ENCODE measurements at regions of chr5 and their contacts with region 1.

Region 1: GRCh38 chr5:72816311-72817145 is at the start of gene TNPO1:
- DNase-seq: peak; percentile 89
- ATAC-seq: peak; percentile 79
- H3K4me3 Mint-ChIP-seq: peak within 1 kb of the TSS; percentile 88
- H3K27ac Mint-ChIP-seq: peak within 1 kb of the TSS; percentile 85
- H3K4me1 Mint-ChIP-seq: peaks cover 14% of the 10 kb centered on the region
- H3K27me3 Mint-ChIP-seq: peaks cover 14% of the 10 kb centered on the region
- total RNA-seq, gene TNPO1: 107 to 162 TPM

Region 2: GRCh38 chr5:72366324-72366976 is 450.1 kb before region 1 on chr5:
- CTCF ChIA-PET with region 1: interaction called, 5 read pairs
- POLR2A ChIA-PET with region 1: no interaction called
- intact Hi-C with region 1: loop called (anchors 2 to 10 kb)
- DNase-seq: peak; percentile 58
- ATAC-seq: peak; percentile 73
- H3K4me3 Mint-ChIP-seq: no peak overlapping the region
- H3K27ac Mint-ChIP-seq: no peak overlapping the region
- H3K4me1 Mint-ChIP-seq: peaks cover 2% of the 10 kb centered on the region
- H3K27me3 Mint-ChIP-seq: no peaks in the 10 kb centered on the region

Region 3: GRCh38 chr5:72611118-72611730 is 205.3 kb before region 1 on chr5:
- CTCF ChIA-PET with region 1: interaction called, 39 read pairs
- POLR2A ChIA-PET with region 1: no interaction called
- intact Hi-C with region 1: loop called (anchors 1 to 2 kb)
- DNase-seq: peak; percentile 74
- ATAC-seq: peak; percentile 70
- H3K4me3 Mint-ChIP-seq: no peak overlapping the region
- H3K27ac Mint-ChIP-seq: no peak overlapping the region
- H3K4me1 Mint-ChIP-seq: peaks cover 8% of the 10 kb centered on the region
- H3K27me3 Mint-ChIP-seq: peaks cover 15% of the 10 kb centered on the region

Region 4: DNA sequence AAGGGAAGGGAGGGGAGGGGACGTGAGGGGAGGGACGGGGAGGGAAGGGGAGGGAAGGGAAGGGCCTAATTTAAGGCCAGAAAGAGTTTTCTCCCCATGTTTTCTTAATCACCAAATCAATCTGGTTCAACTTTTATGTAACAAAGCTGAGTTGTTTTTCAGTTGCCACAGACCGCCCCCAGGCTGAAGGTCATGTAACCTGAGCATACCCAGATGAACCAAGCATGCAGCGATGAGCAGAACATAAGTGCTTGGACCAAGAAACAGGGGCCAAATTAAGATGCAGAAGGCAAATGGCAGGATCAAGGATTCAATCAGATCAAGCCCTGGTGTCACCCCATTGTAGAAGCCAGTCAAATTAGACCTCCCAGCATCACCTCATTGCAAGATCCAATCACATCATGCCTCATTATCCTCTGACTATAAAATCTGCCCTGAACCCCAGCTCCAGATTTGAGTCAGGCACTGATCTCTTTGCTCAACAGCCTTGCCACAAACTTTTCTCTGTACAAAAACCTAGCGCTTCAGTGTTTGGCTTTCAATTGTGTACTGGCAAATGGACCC is 113.6 kb before region 1 on chr5:
- CTCF ChIA-PET with region 1: no interaction called
- POLR2A ChIA-PET with region 1: no interaction called
- intact Hi-C with region 1: no loop called
- DNase-seq: peak; percentile 6
- ATAC-seq: peak; percentile 61
- H3K4me3 Mint-ChIP-seq: no peak overlapping the region
- H3K27ac Mint-ChIP-seq: no peak overlapping the region
- H3K4me1 Mint-ChIP-seq: no peaks in the 10 kb centered on the region
- H3K27me3 Mint-ChIP-seq: peaks cover 24% of the 10 kb centered on the region

Region 5: DNA sequence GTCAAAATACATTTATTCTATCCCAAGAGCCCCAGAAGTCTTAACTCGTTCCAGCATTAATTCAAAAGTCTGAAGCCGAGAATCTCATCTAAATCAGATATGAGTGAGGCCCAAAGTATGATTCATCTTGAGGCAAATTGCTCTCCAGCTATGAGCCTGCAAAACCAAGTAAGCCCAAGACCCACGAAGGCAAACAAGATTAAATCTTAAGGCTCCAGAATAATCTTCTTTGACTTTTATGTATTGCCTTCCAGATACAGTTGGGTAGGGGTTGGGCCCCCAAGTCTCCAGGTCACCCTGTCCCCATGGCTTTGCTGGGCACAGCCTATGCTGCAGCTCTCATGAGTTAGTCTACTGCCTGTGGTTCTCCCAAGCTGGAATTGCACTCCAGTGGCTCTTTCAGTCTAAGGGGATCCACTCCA is 19.2 kb after region 1 on chr5:
- CTCF ChIA-PET with region 1: interaction called, 53 read pairs
- POLR2A ChIA-PET with region 1: no interaction called
- intact Hi-C with region 1: no loop called
- DNase-seq: no peak
- ATAC-seq: no peak
- H3K4me3 Mint-ChIP-seq: no peak overlapping the region
- H3K27ac Mint-ChIP-seq: no peak overlapping the region
- H3K4me1 Mint-ChIP-seq: peaks cover 6% of the 10 kb centered on the region
- H3K27me3 Mint-ChIP-seq: no peaks in the 10 kb centered on the region

Region 6: DNA sequence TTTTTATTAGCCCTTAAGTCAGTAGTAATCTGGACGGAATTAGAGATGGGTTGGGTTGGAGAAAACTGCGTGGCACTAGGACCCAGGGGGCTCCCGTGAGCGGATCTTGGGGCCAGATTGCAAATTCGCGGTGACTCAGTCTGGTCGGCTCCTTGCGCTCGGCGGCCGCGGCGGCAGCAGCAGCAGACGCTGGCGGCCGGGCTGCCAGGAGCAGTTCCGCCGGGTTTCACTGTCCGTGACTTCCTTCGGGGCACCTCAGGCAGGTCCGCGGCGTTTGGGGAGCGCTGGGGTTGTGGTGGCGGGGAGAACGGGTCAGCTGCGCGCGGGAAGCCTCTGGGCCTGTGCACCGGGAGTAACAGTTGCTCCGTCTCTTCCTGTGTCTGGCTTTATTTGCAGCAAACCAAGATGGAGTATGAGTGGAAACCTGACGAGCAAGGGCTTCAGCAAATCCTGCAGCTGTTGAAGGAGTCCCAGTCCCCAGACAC is 31.5 kb after region 1 on chr5:
- CTCF ChIA-PET with region 1: interaction called, 11 read pairs
- POLR2A ChIA-PET with region 1: interaction called, 4 read pairs
- intact Hi-C with region 1: loop called (anchors 1 kb)
- DNase-seq: peak; percentile 92
- ATAC-seq: peak; percentile 88
- H3K4me3 Mint-ChIP-seq: peak overlapping the region; percentile 92
- H3K27ac Mint-ChIP-seq: peak overlapping the region; percentile 97
- H3K4me1 Mint-ChIP-seq: peaks cover 45% of the 10 kb centered on the region
- H3K27me3 Mint-ChIP-seq: no peaks in the 10 kb centered on the region

Region 7: DNA sequence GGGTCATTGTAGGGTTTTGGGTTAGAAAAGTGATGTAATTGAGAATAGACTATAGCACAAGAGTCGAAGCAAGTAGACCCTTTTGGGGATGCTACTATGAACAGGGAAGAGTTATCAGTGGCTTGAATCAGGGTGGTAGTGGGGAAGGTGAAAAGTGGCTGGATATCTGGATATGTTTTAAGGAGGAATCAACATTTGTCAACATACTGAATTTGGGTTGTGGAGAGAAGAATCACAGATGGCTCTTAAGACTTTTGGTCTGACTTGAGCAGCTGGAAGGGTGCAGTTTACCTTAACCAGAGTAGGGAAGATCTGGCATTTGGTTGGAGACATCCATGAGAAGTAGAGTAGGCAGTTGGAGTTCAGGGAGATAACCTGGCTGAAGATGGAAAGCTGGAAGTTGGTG is 100.8 kb after region 1 on chr5:
- CTCF ChIA-PET with region 1: no interaction called
- POLR2A ChIA-PET with region 1: no interaction called
- intact Hi-C with region 1: no loop called
- DNase-seq: no peak
- ATAC-seq: no peak
- H3K4me3 Mint-ChIP-seq: no peak overlapping the region
- H3K27ac Mint-ChIP-seq: no peak overlapping the region
- H3K4me1 Mint-ChIP-seq: no peaks in the 10 kb centered on the region
- H3K27me3 Mint-ChIP-seq: no peaks in the 10 kb centered on the region